ENCODE measurements at regions of chr5 and their contacts with region 1.

Region 1: DNA sequence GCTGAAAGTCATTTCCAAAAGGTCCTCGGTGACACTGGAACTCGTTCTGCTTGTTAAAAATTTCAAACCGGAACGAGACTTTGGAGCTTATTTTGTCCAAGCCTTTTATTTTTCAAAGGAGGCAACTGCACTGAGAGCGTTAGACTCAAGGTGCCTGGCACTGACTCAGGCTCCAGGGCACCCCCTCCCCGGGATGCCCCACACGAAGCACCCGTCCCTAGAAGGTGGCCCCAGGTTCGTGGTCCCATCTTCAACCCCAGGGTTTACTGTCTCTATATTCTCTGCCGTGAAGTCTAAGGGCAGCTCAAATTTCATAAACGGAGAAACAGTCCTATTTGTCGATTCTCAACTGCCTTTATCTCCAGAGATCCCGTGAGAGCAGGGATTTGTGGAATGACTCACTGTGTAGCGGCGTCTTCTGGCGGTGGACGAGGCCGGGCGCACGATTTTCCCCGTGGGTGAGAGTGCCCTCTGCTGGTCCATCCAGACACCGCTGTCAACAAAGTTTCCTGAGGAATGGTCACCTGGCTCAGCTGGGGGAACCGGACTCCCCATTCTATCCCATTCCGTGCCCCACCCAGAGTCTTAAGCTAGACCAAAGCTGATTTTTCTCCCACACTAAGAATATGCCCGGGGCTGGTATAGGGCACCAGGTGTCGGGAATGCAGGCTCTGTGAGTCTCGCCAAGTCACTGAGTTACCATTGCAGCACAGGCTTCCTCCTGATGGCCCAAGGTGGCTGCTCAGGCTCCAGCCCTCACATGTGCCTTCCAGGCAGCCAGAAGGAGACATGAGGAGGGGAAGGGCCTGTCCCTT is 27.1 kb upstream of the SLC6A19 start:
- DNase-seq: peak; percentile 42 to 83
- H3K4me3 ChIP-seq: no peak overlapping the region
- H3K4me1 ChIP-seq: no peaks in the 10 kb centered on the region; the same call in 1 of the 2 replicates
- H3K27me3 ChIP-seq: no peaks in the 10 kb centered on the region

Region 2: DNA sequence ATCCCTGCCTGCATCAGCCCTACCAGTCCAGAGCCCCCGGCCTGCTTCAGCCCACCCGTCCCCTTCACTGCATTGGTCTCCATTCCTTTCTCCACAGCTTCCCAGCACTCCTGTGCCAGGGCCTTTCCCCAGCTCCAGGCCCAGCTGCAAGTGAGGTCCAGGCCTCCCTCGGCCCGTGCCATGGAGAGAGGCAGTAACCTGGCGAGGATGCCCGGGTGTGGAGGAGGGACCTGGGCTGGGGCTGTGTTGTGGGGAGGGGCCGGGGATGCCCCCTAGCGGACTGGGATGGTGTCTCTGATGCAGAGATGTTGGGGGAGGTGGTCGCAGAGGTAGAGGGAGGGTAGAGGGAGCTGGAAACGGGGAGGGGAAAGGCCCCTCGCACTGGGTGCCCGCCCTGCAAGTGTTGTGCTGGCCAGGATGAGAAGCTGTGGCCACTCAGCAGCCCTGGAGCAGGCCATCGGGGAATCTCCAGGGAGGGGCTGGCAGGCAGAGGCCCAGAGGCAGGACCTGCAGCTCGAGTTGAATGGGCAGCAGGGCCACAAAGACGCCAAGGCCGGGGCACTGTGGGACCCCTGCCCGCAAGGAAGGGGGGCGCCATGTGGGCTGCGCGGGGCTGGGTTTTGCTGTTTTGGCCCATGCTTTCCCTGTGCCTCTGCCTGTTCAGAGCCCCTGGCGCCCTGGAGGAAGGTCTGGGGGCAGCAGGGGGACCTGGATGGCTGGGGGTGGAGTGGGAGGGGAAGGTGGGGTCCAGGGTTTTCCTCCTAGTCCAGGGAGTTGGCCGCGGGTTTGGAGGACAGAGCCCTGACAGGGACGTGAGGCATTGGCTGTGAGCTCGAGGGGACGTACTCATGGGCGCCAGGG is 191.7 kb before region 1 on chr5:
- in situ Hi-C with region 1: no loop called
- DNase-seq: peak in 1 of 2 experiments; percentile 21
- H3K4me3 ChIP-seq: no peak overlapping the region
- H3K4me1 ChIP-seq: peaks cover 11% of the 10 kb centered on the region
- H3K27me3 ChIP-seq: no peaks in the 10 kb centered on the region

Region 3: DNA sequence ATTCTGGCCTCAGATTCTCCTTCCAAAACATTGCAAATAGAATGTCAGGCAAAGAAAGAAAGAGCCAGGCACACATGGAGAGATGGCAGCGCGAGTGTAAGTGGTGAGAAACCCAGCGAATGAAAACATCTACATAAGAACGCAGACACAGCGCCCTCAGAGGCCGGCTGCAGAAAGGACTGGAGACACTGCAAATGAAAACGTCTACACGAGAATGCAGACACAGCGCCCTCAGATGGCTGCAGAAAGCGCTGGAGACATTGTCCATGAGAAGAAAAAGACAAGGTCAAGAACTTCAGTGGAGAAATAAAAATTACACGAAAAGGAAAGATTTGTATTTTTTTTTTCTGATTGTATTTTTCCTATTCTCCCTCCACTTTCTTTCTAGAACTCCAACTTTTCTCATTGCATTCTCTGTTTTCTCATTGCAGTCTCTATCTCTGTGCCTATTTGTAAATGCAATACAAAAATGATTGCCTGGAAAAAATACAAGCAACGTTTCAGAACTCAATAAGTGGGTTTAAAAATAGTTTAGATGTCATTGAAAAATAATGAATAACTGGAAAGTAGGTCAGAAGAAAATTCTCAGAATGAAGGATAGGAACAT is 467.3 kb after region 1 on chr5:
- in situ Hi-C with region 1: loop called (anchors 10 kb)
- DNase-seq: peak; percentile 87
- H3K4me3 ChIP-seq: no peak overlapping the region
- H3K4me1 ChIP-seq: no peaks in the 10 kb centered on the region
- H3K27me3 ChIP-seq: 0 out of 2 replicates have a peak, but pooled peaks cover 5% of the 10 kb centered on the region